Breast epithelium (tissue), 4 donors: ENCODE measurements at regions of chr11 and their contacts with region 1.

Region 1: GRCh38 chr11:68010090-68011041 is at the start of gene ALDH3B1:
- DNase-seq: peak; percentile 82 to 85
- H3K4me3 ChIP-seq: peak within 1 kb of the TSS; percentile 36 to 63 (median 37)
- H3K27ac ChIP-seq: peak within 1 kb of the TSS; percentile 95 to 98
- H3K4me1 ChIP-seq: peaks cover 35 to 36% of the 10 kb centered on the region in 2 donors
- H3K27me3 ChIP-seq: no peaks in the 10 kb centered on the region
- CTCF ChIP-seq: peak in 1 of 3 donors; percentile 15
- POLR2A ChIP-seq: no peak
- total RNA-seq, gene ALDH3B1: 9.8 to 26.4 (median 20.6) TPM

Region 2: DNA sequence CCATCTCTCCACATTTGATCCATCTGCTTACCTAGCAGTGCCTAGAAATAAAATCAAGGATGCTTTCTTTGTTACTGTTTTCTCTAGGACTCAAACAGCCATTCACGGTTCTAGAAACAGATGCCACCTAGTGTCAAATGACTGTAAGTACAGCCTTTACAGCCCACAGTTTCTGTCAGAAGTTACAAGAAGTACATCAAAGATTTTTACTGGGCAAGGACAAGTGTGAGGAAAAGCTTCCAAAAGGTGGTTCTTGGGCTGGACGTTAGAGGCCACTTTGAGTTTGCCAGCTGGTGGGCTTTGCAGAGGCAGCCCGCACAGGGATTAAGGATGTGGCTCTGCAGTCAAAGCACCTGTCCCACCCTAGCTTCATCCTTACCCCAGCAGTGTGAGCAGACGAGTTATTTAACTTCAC is 195.8 kb after region 1 on chr11:
- intact Hi-C with region 1: loop called (anchors 1 kb)
- DNase-seq: no peak
- H3K4me3 ChIP-seq: no peak overlapping the region
- H3K27ac ChIP-seq: peak overlapping the region in 1 of 2 donors; percentile 17
- H3K4me1 ChIP-seq: peaks cover 0 to 21% of the 10 kb centered on the region in 2 donors
- H3K27me3 ChIP-seq: no peaks in the 10 kb centered on the region
- CTCF ChIP-seq: peak; percentile 68 to 82 (median 72)
- POLR2A ChIP-seq: no peak

Region 3: DNA sequence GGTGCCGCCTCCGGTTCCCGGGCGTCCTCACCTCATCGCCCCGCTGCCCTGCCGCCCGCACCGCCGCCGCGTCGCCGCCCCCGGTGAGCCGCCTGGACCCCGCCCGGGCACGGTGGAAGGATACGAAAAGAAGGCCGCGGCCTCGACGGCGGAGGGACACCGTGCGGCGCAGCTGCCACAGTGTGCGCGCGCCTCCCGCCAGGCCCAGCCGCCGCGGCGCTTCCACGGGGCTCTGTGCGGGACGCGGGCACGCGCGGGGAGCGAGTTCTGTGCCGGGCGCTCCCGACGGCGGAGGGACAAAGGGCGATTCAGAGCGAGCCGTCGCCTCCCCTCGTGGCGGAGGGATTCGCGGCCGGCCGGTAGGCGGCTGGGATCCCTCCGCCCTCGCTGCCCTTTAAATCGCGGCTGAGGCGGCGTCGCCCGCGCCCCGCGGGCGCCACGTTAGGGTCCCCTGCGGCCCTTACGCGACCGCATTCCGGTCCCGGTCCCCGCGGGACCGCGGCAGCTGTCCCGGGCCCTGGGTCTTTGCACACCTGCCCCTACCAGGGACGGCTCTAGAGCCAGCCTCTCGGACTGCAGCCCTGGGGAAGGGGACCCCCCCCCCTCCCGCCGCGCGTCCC is 203.3 kb after region 1 on chr11:
- intact Hi-C with region 1: loop called (anchors 2 kb)
- DNase-seq: peak; percentile 80 to 84
- H3K4me3 ChIP-seq: peak overlapping the region; percentile 86 to 91 (median 86)
- H3K27ac ChIP-seq: peak overlapping the region; percentile 99 to 100
- H3K4me1 ChIP-seq: peaks cover 8 to 11% of the 10 kb centered on the region in 2 donors
- H3K27me3 ChIP-seq: no peaks in the 10 kb centered on the region
- CTCF ChIP-seq: peak in 2 of 3 donors; percentile 48 to 62
- POLR2A ChIP-seq: peak; percentile 94